Activated CD4-positive, alpha-beta T cell treated with anti-CD3 and anti-CD28 coated beads, Interleukin-2, amount 10 ng/mL, durations not matched to agents 24 days and 14 days (primary cell): ENCODE measurements at regions of chr18 and their contacts with region 1.

Region 1: DNA sequence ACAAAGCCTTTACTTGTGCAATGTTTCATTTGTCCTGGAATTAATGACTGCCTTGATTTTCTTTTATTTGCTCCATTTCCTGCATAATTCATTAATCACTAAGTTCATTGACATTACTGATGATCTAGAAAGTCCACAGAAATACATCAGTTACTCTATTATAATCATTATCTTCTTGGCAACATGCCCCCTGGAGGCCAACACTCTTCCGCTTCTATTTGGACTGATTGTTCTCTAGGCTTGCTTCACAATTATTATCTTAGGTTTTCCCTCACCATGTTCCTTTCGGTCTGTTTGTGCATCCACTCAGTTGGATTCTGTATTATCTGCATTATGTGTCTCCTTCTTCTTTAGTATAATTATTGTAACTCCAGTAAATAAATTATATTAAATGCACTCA is 461.0 kb upstream of the CDH2 start:
- DNase-seq: no peak
- H3K4me3 Mint-ChIP-seq: no peak overlapping the region
- H3K27ac Mint-ChIP-seq: no peak overlapping the region
- H3K4me1 Mint-ChIP-seq: no peaks in the 10 kb centered on the region
- H3K27me3 Mint-ChIP-seq: no peaks in the 10 kb centered on the region

Region 2: DNA sequence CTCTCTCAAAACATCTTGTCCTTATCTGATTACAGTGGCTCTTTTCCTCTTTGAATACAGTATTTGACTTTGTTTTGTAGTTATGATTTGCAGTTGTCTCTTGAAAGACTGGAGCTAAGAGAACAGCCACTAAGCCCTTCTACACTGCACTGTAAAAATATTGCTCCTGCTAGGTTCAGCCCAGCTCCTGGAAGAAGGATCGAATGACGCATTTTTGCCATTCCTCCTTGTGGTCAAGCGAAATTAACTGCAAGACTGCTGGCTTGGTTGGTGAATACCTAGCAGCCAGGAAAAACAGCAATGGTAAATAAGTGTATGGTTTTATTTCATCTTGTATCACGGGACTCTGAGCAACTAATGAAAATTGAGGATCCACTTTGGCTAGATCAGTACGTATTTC is 53.2 kb before region 1 on chr18:
- intact Hi-C with region 1: loop called (anchors 10 kb)
- DNase-seq: no peak
- H3K4me3 Mint-ChIP-seq: no peak overlapping the region
- H3K27ac Mint-ChIP-seq: no peak overlapping the region
- H3K4me1 Mint-ChIP-seq: no peaks in the 10 kb centered on the region
- H3K27me3 Mint-ChIP-seq: no peaks in the 10 kb centered on the region